ENCODE measurements at regions of chr16 and their contacts with region 1.

Region 1: GRCh38 chr16:2926650-2927646 is 15.2 kb downstream of the FLYWCH1 start:
- DNase-seq: peak; percentile 78
- H3K4me3 ChIP-seq: peak overlapping the region in 1 of 3 experiments; percentile 12
- H3K27ac ChIP-seq: peak overlapping the region; percentile 26
- H3K4me1 ChIP-seq: peaks cover 18% of the 10 kb centered on the region
- H3K27me3 ChIP-seq: no peaks in the 10 kb centered on the region
- CTCF ChIP-seq: peak; percentile 93 to 95

Region 2: DNA sequence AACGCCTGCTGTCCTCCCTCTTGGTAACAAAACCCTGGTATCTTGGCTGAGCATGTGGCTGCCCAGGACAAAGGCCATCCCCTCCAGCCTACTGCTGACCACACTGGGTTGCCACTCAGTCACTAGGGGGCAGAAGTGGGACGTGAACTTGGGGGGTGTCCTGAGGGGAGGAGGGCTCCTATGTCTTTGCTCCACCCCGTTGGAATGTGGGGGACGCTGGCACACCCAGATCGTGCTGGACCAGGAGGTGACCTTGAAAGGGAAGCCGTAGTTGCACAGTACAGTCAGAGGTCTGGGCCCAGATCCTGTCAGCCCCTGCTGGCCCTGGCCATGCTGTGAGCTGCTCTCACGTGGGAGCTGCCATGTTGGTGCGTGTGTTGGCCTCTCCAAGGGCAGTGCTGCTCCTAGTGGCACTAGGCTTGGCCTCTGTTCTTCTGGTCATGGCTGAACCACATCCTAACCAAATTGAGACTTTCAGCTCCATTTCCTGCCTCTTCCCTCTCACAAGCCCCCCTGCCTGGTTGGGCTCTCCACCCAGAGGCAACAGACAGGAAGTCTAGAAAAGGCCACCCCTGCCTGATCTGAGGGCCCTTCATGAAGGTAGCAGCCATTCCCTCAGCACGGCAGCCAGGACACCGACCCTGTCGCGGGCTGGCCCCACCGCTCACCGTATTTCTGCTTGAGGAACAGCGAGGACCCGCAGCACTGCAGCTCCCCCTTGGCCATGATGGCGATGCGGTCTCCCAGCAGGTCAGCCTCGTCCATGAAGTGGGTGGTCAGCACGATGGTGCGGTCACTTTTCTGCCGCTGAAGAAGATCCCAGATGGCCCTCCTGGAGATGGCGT is 630.1 kb before region 1 on chr16:
- CTCF ChIA-PET with region 1: no interaction called
- dilution Hi-C with region 1: loop called (anchors 10 kb)
- in situ Hi-C with region 1: no loop called
- intact Hi-C with region 1: no loop called
- DNase-seq: no peak
- H3K4me3 ChIP-seq: no peak overlapping the region
- H3K27ac ChIP-seq: no peak overlapping the region
- H3K4me1 ChIP-seq: no peaks in the 10 kb centered on the region
- H3K27me3 ChIP-seq: no peaks in the 10 kb centered on the region
- CTCF ChIP-seq: peak; percentile 29 to 58

Region 3: DNA sequence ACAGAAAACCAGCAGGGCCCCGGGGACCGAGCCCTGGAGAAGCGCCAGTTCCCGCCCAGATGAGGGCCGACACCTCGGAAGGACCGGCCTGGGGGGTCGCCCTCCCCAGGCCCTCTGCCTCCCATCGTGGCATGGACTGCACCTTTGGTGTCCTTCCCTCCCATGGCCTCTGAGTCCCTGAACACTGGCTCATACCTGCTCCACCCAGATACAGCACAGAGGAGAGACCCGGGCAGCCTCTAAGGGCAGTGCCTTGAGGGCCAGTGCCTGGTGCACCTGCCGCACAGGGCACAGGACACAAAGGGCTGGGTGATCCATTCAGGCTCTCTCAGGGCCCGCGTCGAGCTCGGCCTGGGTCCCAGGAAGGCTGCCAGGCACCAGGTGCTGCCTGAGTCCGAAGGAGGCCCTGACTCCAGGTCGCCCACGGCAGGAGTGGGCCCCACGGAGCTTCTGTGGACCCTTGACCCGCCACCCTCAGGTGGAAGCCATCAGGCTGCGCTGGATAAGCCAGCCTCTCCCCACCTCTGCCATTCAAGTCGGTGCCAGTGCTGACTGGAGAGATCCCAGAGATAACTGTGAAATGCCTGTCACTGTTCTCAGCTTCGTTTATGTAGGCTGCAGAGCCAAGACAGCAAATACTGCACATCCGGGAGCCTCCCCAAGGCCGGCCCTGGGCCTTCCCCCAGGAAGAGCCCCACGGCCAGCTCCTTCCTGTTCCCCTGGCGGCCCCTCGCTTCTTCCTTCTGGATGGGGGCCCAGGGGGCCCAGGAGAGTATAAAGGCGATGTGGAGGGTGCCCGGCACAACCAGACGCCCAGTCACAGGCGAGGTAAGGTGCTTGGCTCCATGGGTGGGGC is 97.2 kb before region 1 on chr16 and contains the start of gene ZG16B:
- CTCF ChIA-PET with region 1: no interaction called
- dilution Hi-C with region 1: loop called (anchors 5 kb)
- in situ Hi-C with region 1: no loop called
- intact Hi-C with region 1: no loop called
- DNase-seq: peak; percentile 35
- H3K4me3 ChIP-seq: no peak within 1 kb of the TSS
- H3K27ac ChIP-seq: no peak within 1 kb of the TSS
- H3K4me1 ChIP-seq: no peaks in the 10 kb centered on the region
- H3K27me3 ChIP-seq: peaks cover 8% of the 10 kb centered on the region
- CTCF ChIP-seq: no peak
- total RNA-seq, gene ZG16B: 2.7 TPM in 1 of 2 donors, not detected in the other

Region 4: DNA sequence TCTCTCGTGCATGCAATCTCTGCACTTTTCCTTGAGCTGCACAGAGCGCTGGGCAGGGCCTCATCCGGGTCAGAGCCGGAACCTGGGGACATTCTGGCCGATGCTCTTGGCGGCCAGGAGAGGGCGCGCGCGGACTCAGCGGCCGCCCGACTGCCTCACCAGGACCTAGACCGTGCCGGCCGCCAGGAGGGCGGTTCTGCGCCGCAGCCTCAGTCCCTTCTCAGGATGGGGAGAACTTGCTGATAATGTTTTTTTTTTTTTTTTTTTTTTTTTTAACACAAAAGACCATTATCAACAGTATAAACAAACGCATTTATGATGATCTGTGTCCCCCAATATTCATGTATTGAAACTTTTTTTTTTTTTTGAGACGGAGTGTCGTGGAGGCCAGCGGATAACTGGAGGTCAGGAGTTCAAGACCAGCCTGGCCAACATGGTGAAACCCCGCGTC is 52.0 kb before region 1 on chr16:
- CTCF ChIA-PET with region 1: interaction called, 5 read pairs
- dilution Hi-C with region 1: loop called (anchors 5 kb)
- in situ Hi-C with region 1: loop called in 1 of 2 experiments (anchors 5 kb)
- intact Hi-C with region 1: loop called (anchors 1 kb)
- DNase-seq: peak; percentile 55
- H3K4me3 ChIP-seq: no peak overlapping the region
- H3K27ac ChIP-seq: no peak overlapping the region
- H3K4me1 ChIP-seq: no peaks in the 10 kb centered on the region
- H3K27me3 ChIP-seq: no peaks in the 10 kb centered on the region
- CTCF ChIP-seq: peak; percentile 89 to 90

Region 5: GRCh38 chr16:2883027-2883851 is 43.7 kb before region 1 on chr16 and contains the start of gene FLYWCH2:
- CTCF ChIA-PET with region 1: no interaction called
- dilution Hi-C with region 1: loop called (anchors 5 kb)
- in situ Hi-C with region 1: loop called in 1 of 2 experiments (anchors 5 kb)
- intact Hi-C with region 1: no loop called
- DNase-seq: peak; percentile 96
- H3K4me3 ChIP-seq: peak within 1 kb of the TSS; percentile 66 to 93 (median 70)
- H3K27ac ChIP-seq: peak within 1 kb of the TSS; percentile 56
- H3K4me1 ChIP-seq: peaks cover 8% of the 10 kb centered on the region
- H3K27me3 ChIP-seq: no peaks in the 10 kb centered on the region
- CTCF ChIP-seq: no peak
- total RNA-seq, gene FLYWCH2: 20.2 to 38.3 TPM

Region 6: DNA sequence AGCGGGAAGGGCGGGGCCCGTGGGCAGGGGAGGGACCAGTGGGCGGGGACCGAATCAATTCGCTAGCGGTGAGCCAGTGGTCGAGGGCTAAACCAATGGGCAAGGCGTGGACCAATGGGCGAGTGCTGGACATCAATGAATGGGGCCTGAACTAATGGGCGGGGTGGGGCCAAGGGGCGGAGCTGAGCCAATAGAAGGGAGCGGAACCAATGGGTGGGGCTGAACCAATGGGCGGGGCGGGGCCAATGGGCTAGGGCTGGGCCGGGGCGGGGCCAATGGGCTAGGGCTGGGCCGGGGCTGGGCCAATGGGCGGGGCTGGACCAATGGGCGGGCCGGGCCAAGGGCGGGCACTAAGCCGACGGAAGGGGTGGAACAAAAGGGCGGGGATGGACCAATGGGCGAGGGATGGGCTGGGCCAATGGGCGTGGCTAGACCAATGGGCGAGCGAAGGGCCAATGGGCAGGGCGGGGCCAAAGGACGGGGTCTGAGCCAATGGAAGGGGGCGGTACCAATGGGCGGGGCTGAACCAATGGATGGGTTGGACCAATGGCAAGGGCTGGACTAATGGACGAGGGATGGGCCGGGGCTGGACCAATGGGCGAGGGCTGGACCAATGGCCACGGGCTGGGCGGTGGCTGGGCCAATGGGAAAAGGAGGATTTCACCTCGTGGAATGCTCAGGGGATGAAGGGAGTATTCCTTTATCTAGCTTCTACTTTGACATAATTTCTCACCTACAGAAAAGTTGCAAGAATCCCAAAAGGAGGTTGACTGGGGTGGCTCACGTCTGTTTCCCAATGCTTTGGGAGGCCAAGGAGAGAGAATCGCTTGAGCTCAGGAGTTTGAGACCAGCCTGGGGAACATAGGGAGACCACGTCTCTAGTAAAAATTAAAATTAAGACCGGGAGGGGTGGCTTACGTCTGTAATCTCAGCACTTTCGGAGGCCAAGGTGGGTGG is 21.2 kb before region 1 on chr16:
- CTCF ChIA-PET with region 1: no interaction called
- dilution Hi-C with region 1: no loop called
- in situ Hi-C with region 1: no loop called
- intact Hi-C with region 1: loop called (anchors 1 kb)
- DNase-seq: peak; percentile 99
- H3K4me3 ChIP-seq: peak overlapping the region; percentile 82 to 94 (median 94)
- H3K27ac ChIP-seq: no peak overlapping the region
- H3K4me1 ChIP-seq: peaks cover 14% of the 10 kb centered on the region
- H3K27me3 ChIP-seq: no peaks in the 10 kb centered on the region
- CTCF ChIP-seq: no peak

Region 7: GRCh38 chr16:2964475-2965336 is 37.8 kb after region 1 on chr16:
- CTCF ChIA-PET with region 1: no interaction called
- dilution Hi-C with region 1: no loop called
- in situ Hi-C with region 1: no loop called
- intact Hi-C with region 1: loop called (anchors 5 kb)
- DNase-seq: peak; percentile 70
- H3K4me3 ChIP-seq: peak overlapping the region; percentile 37 to 53 (median 53)
- H3K27ac ChIP-seq: no peak overlapping the region
- H3K4me1 ChIP-seq: peaks cover 46% of the 10 kb centered on the region
- H3K27me3 ChIP-seq: no peaks in the 10 kb centered on the region
- CTCF ChIP-seq: no peak